ENCODE measurements at regions of chr3 and their contacts with region 1.

Region 1: DNA sequence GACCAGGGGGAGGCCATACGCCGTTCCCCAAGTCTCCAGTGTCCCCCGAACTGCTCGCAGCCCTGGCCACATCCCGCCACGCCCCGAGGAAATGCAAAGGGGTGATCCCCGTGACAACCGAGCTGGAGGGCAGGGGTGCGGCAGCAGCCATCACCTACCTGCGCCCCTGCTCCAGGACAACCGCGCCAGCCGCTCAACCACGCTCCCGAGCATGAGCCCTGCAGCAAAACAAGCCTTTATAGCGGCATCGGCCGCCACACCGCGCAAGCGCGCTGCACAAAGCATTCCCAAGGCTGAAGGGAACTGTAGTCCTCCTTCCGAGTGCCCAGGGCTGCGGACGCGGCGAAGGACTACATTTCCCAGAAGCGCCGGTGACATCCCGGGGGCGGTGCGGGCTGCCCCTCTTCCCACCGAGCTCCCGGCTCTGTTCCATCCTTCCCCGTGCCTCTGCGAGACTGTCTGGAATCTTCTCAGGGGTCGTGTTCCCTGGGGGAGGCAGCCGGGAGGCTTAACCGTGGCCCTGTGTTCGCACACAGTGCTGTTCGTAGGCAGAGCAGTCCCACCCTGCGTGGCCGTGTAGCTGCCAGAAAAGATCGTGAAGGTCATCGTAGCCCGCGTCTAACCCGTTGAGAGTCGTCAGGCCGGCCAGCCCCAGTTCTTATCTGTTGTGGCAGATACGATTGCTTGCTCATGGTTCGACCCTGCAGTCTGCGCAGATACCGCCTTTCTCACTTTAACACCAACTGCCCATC is at the start of gene ABCC5:
- DNase-seq: peak; percentile 90
- H3K4me3 Mint-ChIP-seq: peak within 1 kb of the TSS; percentile 99
- H3K27ac Mint-ChIP-seq: peak within 1 kb of the TSS; percentile 71
- H3K4me1 Mint-ChIP-seq: peaks cover 30% of the 10 kb centered on the region
- H3K27me3 Mint-ChIP-seq: peaks cover 12% of the 10 kb centered on the region
- CTCF ChIP-seq: peak; percentile 28
- total RNA-seq, gene ABCC5: 16.5 and 17.9 TPM in 2 replicates

Region 2: GRCh38 chr3:183895296-183895695 is 122.6 kb before region 1 on chr3:
- CTCF ChIA-PET with region 1: interaction called, 41 read pairs
- POLR2A ChIA-PET with region 1: interaction called, 18 read pairs
- intact Hi-C with region 1: no loop called
- DNase-seq: peak; percentile 60
- H3K4me3 Mint-ChIP-seq: no peak overlapping the region
- H3K27ac Mint-ChIP-seq: no peak overlapping the region
- H3K4me1 Mint-ChIP-seq: no peaks in the 10 kb centered on the region
- H3K27me3 Mint-ChIP-seq: no peaks in the 10 kb centered on the region
- CTCF ChIP-seq: peak; percentile 82

Region 3: GRCh38 chr3:183904833-183905780 is 112.7 kb before region 1 on chr3:
- CTCF ChIA-PET with region 1: interaction called, 5 read pairs
- POLR2A ChIA-PET with region 1: interaction called, 4 read pairs
- intact Hi-C with region 1: loop called (anchors 1 kb)
- DNase-seq: no peak
- H3K4me3 Mint-ChIP-seq: no peak overlapping the region
- H3K27ac Mint-ChIP-seq: no peak overlapping the region
- H3K4me1 Mint-ChIP-seq: no peaks in the 10 kb centered on the region
- H3K27me3 Mint-ChIP-seq: no peaks in the 10 kb centered on the region
- CTCF ChIP-seq: no peak

Region 4: DNA sequence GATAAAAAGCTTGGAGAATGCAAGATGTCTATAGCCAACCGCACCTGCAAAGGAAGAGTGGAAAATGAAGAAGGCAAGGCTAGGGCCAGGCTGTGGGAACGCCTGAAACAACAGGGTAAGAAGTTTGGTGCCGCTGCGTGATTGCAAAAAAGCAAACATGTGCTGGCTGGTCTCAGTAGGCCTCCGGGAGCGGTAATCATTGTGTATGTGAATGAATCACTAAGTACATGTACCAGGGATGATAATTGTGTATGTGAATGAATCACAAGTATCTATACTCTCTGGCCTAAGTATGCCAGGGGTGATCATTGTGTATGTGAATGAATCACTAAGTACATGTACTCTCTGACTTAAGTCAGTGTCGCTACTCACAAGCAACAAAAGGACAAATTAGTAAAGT is 92.9 kb before region 1 on chr3:
- CTCF ChIA-PET with region 1: no interaction called
- POLR2A ChIA-PET with region 1: no interaction called
- intact Hi-C with region 1: loop called (anchors 5 kb)
- DNase-seq: peak; percentile 93
- H3K4me3 Mint-ChIP-seq: peak overlapping the region; percentile 38
- H3K27ac Mint-ChIP-seq: peak overlapping the region; percentile 13
- H3K4me1 Mint-ChIP-seq: peaks cover 12% of the 10 kb centered on the region
- H3K27me3 Mint-ChIP-seq: no peaks in the 10 kb centered on the region
- CTCF ChIP-seq: no peak

Region 5: GRCh38 chr3:183959214-183959613 is 58.6 kb before region 1 on chr3:
- CTCF ChIA-PET with region 1: no interaction called
- POLR2A ChIA-PET with region 1: no interaction called
- intact Hi-C with region 1: no loop called
- DNase-seq: peak; percentile 24
- H3K4me3 Mint-ChIP-seq: no peak overlapping the region
- H3K27ac Mint-ChIP-seq: peak overlapping the region; percentile 75
- H3K4me1 Mint-ChIP-seq: peaks cover 9% of the 10 kb centered on the region
- H3K27me3 Mint-ChIP-seq: no peaks in the 10 kb centered on the region
- CTCF ChIP-seq: no peak

Region 6: DNA sequence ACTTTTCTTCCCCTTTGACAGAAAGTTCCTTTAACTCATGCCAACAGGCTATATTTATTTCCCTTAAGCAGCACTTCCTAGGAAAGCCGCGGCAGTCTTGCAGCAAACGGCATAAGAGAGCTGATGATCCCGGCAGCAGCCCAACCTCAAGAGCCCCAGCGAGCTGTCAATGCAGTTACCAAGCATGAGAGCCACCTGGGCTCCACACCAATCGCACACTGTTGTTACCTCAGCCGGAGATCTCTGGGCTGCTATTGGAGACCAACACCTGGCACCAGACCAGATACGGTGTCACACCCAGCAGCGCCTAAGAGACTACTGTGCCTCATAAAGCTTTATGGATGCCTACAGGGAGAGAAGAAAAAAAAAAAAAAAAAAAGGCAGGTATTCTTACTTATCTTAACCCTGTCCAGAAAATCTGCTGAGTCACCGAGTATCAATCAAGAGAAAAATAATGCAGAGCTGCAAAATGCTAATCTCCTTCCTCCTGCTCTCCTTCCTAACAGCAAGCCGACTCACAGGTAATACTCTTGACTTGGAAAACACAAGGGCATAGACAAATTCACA is 11.8 kb before region 1 on chr3:
- CTCF ChIA-PET with region 1: interaction called, 24 read pairs
- POLR2A ChIA-PET with region 1: interaction called, 26 read pairs
- intact Hi-C with region 1: no loop called
- DNase-seq: peak; percentile 86
- H3K4me3 Mint-ChIP-seq: peak overlapping the region; percentile 50
- H3K27ac Mint-ChIP-seq: peak overlapping the region; percentile 37
- H3K4me1 Mint-ChIP-seq: peaks cover 12% of the 10 kb centered on the region
- H3K27me3 Mint-ChIP-seq: no peaks in the 10 kb centered on the region
- CTCF ChIP-seq: no peak